Uterus (tissue), 4 donors: ENCODE measurements at regions of chr11 and their contacts with region 1.

Region 1: DNA sequence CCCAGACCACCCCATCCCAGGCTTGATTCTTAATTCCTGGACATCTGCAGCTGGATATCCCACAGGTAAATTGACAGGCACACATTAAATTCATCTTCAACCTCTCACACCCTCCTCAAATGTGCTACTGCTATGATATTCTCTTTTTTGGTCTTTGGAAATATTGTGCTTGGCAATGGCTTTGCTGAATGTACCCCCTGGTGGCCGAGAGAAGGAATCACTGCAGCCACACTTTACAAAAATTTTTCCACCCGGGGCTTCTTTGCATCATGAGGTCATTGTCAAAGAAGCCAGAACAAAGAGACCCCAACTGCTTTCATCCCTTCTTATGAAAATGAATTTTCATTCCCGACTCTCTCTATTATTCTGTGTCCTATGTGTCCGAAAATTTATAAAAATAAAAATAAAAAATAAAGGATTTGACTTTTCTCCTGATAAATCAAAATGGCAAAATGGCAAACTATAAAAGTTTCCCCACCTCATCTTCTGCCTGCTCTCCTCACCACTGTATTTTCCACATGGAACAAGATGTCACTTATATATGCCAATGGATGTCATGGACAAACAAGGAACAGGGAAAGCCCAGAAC is 15.0 kb upstream of the CYB5R2 start:
- DNase-seq: no peak
- H3K4me3 ChIP-seq: no peak overlapping the region
- H3K27ac ChIP-seq: no peak overlapping the region
- H3K4me1 ChIP-seq: no peaks in the 10 kb centered on the region
- H3K27me3 ChIP-seq: no peaks in the 10 kb centered on the region
- CTCF ChIP-seq: peak; percentile 68 to 85 (median 77)
- POLR2A ChIP-seq: no peak

Region 2: GRCh38 chr11:7571640-7572000 is 116.7 kb before region 1 on chr11:
- intact Hi-C with region 1: loop called (anchors 5 kb)
- DNase-seq: peak; percentile 69 to 77
- H3K4me3 ChIP-seq: no peak overlapping the region
- H3K27ac ChIP-seq: peak overlapping the region in 1 of 2 donors; percentile 55
- H3K4me1 ChIP-seq: peaks cover 0 to 13% of the 10 kb centered on the region in 2 donors
- H3K27me3 ChIP-seq: no peaks in the 10 kb centered on the region
- CTCF ChIP-seq: peak; percentile 91 to 97 (median 93)
- POLR2A ChIP-seq: no peak

Region 3: GRCh38 chr11:9438611-9439010 is 1750.3 kb after region 1 on chr11:
- intact Hi-C with region 1: no loop called
- DNase-seq: no peak
- H3K4me3 ChIP-seq: no peak overlapping the region
- H3K27ac ChIP-seq: no peak overlapping the region
- H3K4me1 ChIP-seq: no peaks in the 10 kb centered on the region
- H3K27me3 ChIP-seq: no peaks in the 10 kb centered on the region
- CTCF ChIP-seq: no peak
- POLR2A ChIP-seq: no peak